ENCODE measurements at regions of chr5 and their contacts with region 1.

Region 1: GRCh38 chr5:151825445-151825844 is 53.7 kb downstream of the G3BP1 start:
- DNase-seq: peak in 4 of 5 donors; percentile 44 to 72 (median 56)
- ATAC-seq: peak; percentile 88 to 94 (median 90)
- H3K4me3 ChIP-seq: no peak overlapping the region
- H3K27ac ChIP-seq: no peak overlapping the region
- H3K4me1 ChIP-seq: peaks cover 0 to 17% (median 1%) of the 10 kb centered on the region in 12 donors
- H3K27me3 ChIP-seq: no peaks in the 10 kb centered on the region
- CTCF ChIP-seq: peak; percentile 74 to 93 (median 88)
- POLR2A ChIP-seq: no peak

Region 2: DNA sequence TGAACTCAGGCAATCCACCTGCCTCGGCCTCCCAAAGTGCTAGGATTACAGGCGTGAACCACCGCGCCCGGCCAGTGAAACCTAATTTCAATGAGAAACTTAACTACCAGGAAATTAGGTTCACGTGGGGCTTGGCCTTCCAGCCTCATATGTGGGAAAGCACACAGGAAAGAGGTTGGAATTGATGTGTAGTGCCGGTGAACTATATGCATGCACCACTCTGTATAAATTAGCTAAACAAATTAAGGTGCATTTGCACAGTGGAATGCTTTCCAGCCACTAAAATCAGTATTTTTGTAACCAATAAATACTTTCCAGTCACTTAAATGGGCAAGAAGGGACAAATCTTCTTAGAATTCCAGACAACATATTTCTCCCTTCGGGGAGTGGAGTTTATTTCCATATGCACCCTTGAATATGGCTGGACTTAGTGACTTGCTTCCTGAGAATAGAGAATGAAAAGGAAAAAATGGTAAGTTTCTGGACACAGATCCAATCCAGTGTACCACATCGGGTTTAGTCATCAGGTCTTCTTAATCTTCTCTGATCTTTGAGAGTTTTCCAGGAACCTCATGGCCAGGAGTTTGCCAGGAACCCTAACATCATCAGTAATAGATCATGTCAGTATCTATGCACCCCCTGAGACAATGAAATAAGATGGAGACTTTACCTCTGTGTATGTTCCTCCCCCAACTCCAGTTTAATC is 91.9 kb before region 1 on chr5:
- intact Hi-C with region 1: no loop called
- DNase-seq: no peak
- ATAC-seq: no peak
- H3K4me3 ChIP-seq: no peak overlapping the region
- H3K27ac ChIP-seq: no peak overlapping the region
- H3K4me1 ChIP-seq: peaks cover 0 to 5% (median 0%) of the 10 kb centered on the region in 12 donors
- H3K27me3 ChIP-seq: no peaks in the 10 kb centered on the region
- CTCF ChIP-seq: no peak
- POLR2A ChIP-seq: no peak

Region 3: GRCh38 chr5:152142840-152143469 is 317.5 kb after region 1 on chr5:
- intact Hi-C with region 1: loop called (anchors 1 to 5 kb)
- DNase-seq: peak in 4 of 5 donors; percentile 25 to 48 (median 39)
- ATAC-seq: peak in 3 of 4 donors; percentile 68 to 78 (median 73)
- H3K4me3 ChIP-seq: no peak overlapping the region
- H3K27ac ChIP-seq: no peak overlapping the region
- H3K4me1 ChIP-seq: peaks cover 0 to 3% (median 0%) of the 10 kb centered on the region in 12 donors
- H3K27me3 ChIP-seq: no peaks in the 10 kb centered on the region
- CTCF ChIP-seq: peak; percentile 72 to 93 (median 84)
- POLR2A ChIP-seq: no peak